CD4-positive, alpha-beta T cell (primary cell): ENCODE measurements at regions of chr12 and their contacts with region 1.

Region 1: GRCh38 chr12:11545484-11546330 is 103.8 kb upstream of the ETV6 start:
- DNase-seq: peak; percentile 21 to 86 (median 40)
- ATAC-seq: peak; percentile 82
- H3K4me3 ChIP-seq: peak overlapping the region; percentile 29
- H3K4me3 Mint-ChIP-seq: peak overlapping the region; percentile 79
- H3K27ac ChIP-seq: peak overlapping the region; percentile 83 to 86
- H3K27ac Mint-ChIP-seq: peak overlapping the region; percentile 93
- H3K4me1 ChIP-seq: peaks cover 58% of the 10 kb centered on the region
- H3K4me1 Mint-ChIP-seq: peaks cover 74% of the 10 kb centered on the region
- H3K27me3 ChIP-seq: no peaks in the 10 kb centered on the region
- H3K27me3 Mint-ChIP-seq: no peaks in the 10 kb centered on the region
- CTCF ChIP-seq: peak; percentile 20

Region 2: DNA sequence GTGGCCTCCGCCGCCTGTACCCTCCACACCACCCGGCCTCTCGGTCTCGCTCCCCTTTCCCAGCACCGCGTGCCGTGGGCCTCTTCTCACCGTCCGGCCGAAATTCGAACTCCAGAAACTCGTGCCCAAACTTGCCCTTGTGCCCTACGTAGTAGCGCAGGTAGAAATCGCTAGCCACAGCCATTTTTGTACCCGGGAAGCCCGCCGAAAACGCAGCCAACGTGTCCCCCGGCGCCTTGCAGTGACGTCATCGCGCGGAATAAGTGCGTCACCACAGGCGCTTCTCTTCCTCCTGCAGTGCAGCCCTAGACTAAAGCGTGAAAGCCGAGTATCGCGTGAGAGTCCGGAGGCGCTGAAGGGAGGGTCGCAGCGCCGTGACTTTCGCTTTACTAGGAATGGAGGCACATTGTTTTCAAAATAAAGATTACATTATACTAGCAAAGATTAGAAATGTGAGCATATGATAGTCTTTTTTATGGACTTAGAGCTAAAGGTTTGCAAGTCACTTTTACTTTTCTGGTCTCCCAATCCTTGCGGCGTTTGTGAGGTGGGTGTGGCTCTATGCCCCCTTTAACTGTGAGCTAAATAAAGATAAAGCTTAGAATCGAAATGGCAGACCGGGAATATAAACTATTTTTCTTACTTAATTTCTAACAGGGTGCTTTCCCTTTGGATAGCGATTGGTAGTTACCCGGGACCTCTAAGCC is 932.2 kb before region 1 on chr12 and contains the start of gene MAGOHB:
- CTCF ChIA-PET with region 1: no interaction called
- POLR2A ChIA-PET with region 1: interaction called, 10 read pairs
- intact Hi-C with region 1: no loop called
- DNase-seq: peak; percentile 95 to 100 (median 98)
- ATAC-seq: peak; percentile 91
- H3K4me3 ChIP-seq: peak within 1 kb of the TSS; percentile 94
- H3K4me3 Mint-ChIP-seq: peak within 1 kb of the TSS; percentile 99
- H3K27ac ChIP-seq: peak within 1 kb of the TSS; percentile 93 to 95
- H3K27ac Mint-ChIP-seq: peak within 1 kb of the TSS; percentile 99
- H3K4me1 ChIP-seq: peaks cover 11% of the 10 kb centered on the region
- H3K4me1 Mint-ChIP-seq: peaks cover 26% of the 10 kb centered on the region
- H3K27me3 ChIP-seq: no peaks in the 10 kb centered on the region
- H3K27me3 Mint-ChIP-seq: peaks cover 17% of the 10 kb centered on the region
- CTCF ChIP-seq: no peak
- total RNA-seq, gene MAGOHB: 7.5 to 7.7 TPM

Region 3: DNA sequence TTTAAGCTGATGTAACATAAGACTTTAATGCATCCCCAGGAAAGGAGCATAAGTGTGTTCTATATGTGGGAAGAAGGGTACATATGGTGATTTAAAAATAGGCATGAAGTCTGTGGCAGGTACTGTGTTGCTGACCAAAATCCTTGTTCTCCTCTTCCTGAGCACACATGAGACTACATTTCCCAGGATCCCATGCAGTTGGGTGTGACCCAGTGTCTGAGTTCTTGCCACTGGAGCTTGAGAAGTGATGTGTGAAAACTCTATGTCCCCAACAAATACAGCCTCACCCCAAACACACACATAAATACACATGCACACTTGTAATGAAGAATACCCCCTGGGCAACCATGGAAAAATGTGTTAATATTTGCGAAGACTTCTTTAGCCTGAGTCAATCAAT is 383.2 kb before region 1 on chr12:
- CTCF ChIA-PET with region 1: no interaction called
- POLR2A ChIA-PET with region 1: interaction called, 4 read pairs
- intact Hi-C with region 1: loop called in 1 of 2 experiments (anchors 10 kb)
- DNase-seq: peak in 1 of 14 experiments; percentile 15
- ATAC-seq: no peak
- H3K4me3 ChIP-seq: no peak overlapping the region
- H3K4me3 Mint-ChIP-seq: no peak overlapping the region
- H3K27ac ChIP-seq: no peak overlapping the region
- H3K27ac Mint-ChIP-seq: no peak overlapping the region
- H3K4me1 ChIP-seq: no peaks in the 10 kb centered on the region
- H3K4me1 Mint-ChIP-seq: peaks cover 80% of the 10 kb centered on the region
- H3K27me3 ChIP-seq: no peaks in the 10 kb centered on the region
- H3K27me3 Mint-ChIP-seq: no peaks in the 10 kb centered on the region
- CTCF ChIP-seq: no peak

Region 4: GRCh38 chr12:11500178-11500860 is 45.4 kb before region 1 on chr12:
- CTCF ChIA-PET with region 1: no interaction called
- POLR2A ChIA-PET with region 1: interaction called, 6 read pairs
- intact Hi-C with region 1: loop called in 1 of 2 experiments (anchors 2 kb)
- DNase-seq: peak; percentile 63 to 89 (median 72)
- ATAC-seq: peak; percentile 91
- H3K4me3 ChIP-seq: no peak overlapping the region
- H3K4me3 Mint-ChIP-seq: no peak overlapping the region
- H3K27ac ChIP-seq: no peak overlapping the region
- H3K27ac Mint-ChIP-seq: no peak overlapping the region
- H3K4me1 ChIP-seq: peaks cover 12% of the 10 kb centered on the region
- H3K4me1 Mint-ChIP-seq: no peaks in the 10 kb centered on the region
- H3K27me3 ChIP-seq: peaks cover 5 to 18% of the 10 kb centered on the region in 2 experiments
- H3K27me3 Mint-ChIP-seq: peaks cover 50% of the 10 kb centered on the region
- CTCF ChIP-seq: no peak

Region 5: GRCh38 chr12:11508699-11509098 is 37.0 kb before region 1 on chr12:
- CTCF ChIA-PET with region 1: interaction called, 3 read pairs
- POLR2A ChIA-PET with region 1: interaction called, 6 read pairs
- intact Hi-C with region 1: loop called (anchors 2 kb)
- DNase-seq: no peak
- ATAC-seq: no peak
- H3K4me3 ChIP-seq: no peak overlapping the region
- H3K4me3 Mint-ChIP-seq: no peak overlapping the region
- H3K27ac ChIP-seq: no peak overlapping the region
- H3K27ac Mint-ChIP-seq: no peak overlapping the region
- H3K4me1 ChIP-seq: no peaks in the 10 kb centered on the region
- H3K4me1 Mint-ChIP-seq: peaks cover 10% of the 10 kb centered on the region
- H3K27me3 ChIP-seq: no peaks in the 10 kb centered on the region
- H3K27me3 Mint-ChIP-seq: no peaks in the 10 kb centered on the region
- CTCF ChIP-seq: no peak

Region 6: GRCh38 chr12:11648831-11649702 is 103.4 kb after region 1 on chr12 and contains the start of gene ETV6:
- CTCF ChIA-PET with region 1: no interaction called
- POLR2A ChIA-PET with region 1: interaction called, 17 read pairs
- intact Hi-C with region 1: loop called in 1 of 2 experiments (anchors 1 kb)
- DNase-seq: peak; percentile 41 to 88 (median 62)
- ATAC-seq: peak; percentile 62
- H3K4me3 ChIP-seq: peak within 1 kb of the TSS; percentile 97
- H3K4me3 Mint-ChIP-seq: peak within 1 kb of the TSS; percentile 98
- H3K27ac ChIP-seq: peak within 1 kb of the TSS; percentile 68 to 81
- H3K27ac Mint-ChIP-seq: peak within 1 kb of the TSS; percentile 92
- H3K4me1 ChIP-seq: peaks cover 26% of the 10 kb centered on the region
- H3K4me1 Mint-ChIP-seq: peaks cover 38% of the 10 kb centered on the region
- H3K27me3 ChIP-seq: no peaks in the 10 kb centered on the region
- H3K27me3 Mint-ChIP-seq: no peaks in the 10 kb centered on the region
- CTCF ChIP-seq: no peak
- total RNA-seq, gene ETV6: 28.5 to 30.2 TPM